ENCODE measurements at regions of chr18 and their contacts with region 1.

Region 1: DNA sequence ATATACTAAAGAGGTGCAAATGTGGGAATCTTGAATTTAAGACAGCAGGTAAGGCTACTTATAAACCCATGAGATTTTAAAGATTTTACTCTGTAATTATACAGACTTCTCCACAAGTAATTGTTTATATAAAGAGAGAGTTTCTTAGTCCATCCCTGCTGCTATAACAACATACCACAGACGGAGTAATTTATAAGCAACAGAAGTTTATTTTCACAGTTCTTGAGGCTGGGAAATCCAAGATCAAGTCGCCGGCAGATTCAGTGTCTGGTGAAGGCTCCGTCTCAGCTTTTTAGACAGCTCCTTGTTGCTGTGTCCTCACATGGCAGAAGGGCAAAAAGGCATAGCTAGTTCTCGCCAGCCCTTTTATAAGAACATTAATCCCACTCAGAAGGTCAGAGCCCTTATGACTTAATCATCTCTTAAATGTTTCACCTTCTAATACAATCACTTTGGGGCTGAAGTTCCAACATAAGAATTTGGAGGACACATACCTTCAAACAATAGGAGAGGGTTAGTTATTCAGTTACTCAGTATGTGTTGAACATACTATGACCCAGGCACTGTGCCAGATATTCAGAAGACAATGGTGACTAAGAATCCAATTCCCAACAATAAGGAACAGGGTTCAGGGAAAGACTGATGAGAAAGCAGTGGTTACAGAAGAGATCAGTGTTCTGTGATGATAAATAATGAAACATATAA is 466.0 kb downstream of the RIT2 start:
- DNase-seq: no peak
- ATAC-seq: no peak
- H3K4me3 ChIP-seq: no peak overlapping the region
- H3K27ac ChIP-seq: no peak overlapping the region
- H3K4me1 ChIP-seq: no peaks in the 10 kb centered on the region
- H3K27me3 ChIP-seq: no peaks in the 10 kb centered on the region
- CTCF ChIP-seq: no peak
- POLR2A ChIP-seq: no peak

Region 2: GRCh38 chr18:42948831-42949230 is 299.3 kb after region 1 on chr18:
- in situ Hi-C with region 1: no loop called
- intact Hi-C with region 1: loop called (anchors 5 kb)
- DNase-seq: no peak
- ATAC-seq: no peak
- H3K4me3 ChIP-seq: no peak overlapping the region
- H3K27ac ChIP-seq: no peak overlapping the region
- H3K4me1 ChIP-seq: no peaks in the 10 kb centered on the region
- H3K27me3 ChIP-seq: no peaks in the 10 kb centered on the region
- CTCF ChIP-seq: no peak
- POLR2A ChIP-seq: no peak

Measured in gastrocnemius medialis (tissue), 4 donors.